Ascending aorta (tissue), 2 donors: ENCODE measurements at regions of chr6 and their contacts with region 1.

Region 1: GRCh38 chr6:36423101-36423824 is 19.4 kb downstream of the PXT1 start:
- DNase-seq: peak; percentile 93 to 99
- H3K4me3 ChIP-seq: peak overlapping the region; percentile 51 to 75
- H3K27ac ChIP-seq: peak overlapping the region; percentile 80 to 87
- H3K4me1 ChIP-seq: peaks cover 3 to 4% of the 10 kb centered on the region in 2 donors
- H3K27me3 ChIP-seq: no peaks in the 10 kb centered on the region
- CTCF ChIP-seq: peak; percentile 55 to 78 (median 60)

Region 2: DNA sequence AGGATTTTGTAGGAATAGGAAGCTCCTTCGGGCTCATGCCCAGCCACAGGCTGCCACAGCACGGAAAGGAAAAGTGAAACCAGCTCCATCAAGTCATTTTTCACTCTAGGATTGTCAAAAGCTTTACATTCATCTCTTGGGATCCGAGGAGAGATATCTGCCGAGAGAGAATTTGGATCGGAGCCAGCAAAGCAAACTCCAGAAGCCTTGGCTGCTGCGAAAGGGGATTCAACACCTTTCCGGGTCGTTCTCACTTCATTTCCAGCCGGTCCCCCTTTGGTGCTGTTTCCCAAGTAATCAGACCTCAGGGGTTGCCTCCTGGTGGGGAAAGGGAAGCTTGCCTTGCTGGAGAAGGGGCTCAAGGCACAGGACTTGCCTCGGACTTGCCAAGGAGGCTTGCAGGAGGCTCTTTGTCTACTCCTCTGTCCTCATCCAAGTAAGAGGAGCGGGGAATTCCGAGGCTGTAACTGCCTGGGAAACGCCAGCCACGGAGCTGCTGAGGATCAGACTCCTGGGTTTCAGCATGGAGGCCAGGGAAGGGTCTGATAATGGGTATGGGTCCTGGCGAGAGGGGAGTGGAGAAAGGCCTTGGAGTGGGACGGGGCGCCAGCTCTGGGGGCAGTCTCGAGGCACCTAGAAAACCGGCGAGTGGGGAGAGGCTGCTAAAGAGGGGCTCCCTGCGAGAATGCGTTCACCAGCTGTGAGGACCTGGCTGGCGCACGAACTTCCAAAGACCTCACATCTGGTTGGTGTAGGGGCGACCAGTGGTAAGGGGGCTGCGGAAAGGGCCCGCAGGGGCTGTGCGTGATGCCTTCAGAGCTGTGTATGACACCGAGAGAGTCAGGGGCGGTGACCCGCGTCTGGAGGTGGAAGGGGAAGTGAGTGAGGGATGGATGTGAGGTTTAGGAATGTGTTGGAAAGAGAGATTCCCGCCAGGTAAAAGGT is 36.5 kb before region 1 on chr6:
- intact Hi-C with region 1: loop called (anchors 2 kb)
- DNase-seq: peak in 1 of 2 donors; percentile 67
- H3K4me3 ChIP-seq: peak overlapping the region; percentile 66 to 78
- H3K27ac ChIP-seq: peak overlapping the region; percentile 61 to 75
- H3K4me1 ChIP-seq: peaks cover 5 to 35% of the 10 kb centered on the region in 2 donors
- H3K27me3 ChIP-seq: no peaks in the 10 kb centered on the region
- CTCF ChIP-seq: peak in 1 of 3 experiments; percentile 4

Region 3: GRCh38 chr6:36442671-36443470 is 19.6 kb after region 1 on chr6 and contains the starts of genes KCTD20 and PXT1:
- intact Hi-C with region 1: loop called (anchors 1 kb)
- DNase-seq: peak; percentile 67 to 94
- H3K4me3 ChIP-seq: peak within 1 kb of the TSS; percentile 88 to 92
- H3K27ac ChIP-seq: peak within 1 kb of the TSS; percentile 96 to 97
- H3K4me1 ChIP-seq: peaks cover 0 to 25% of the 10 kb centered on the region in 2 donors
- H3K27me3 ChIP-seq: no peaks in the 10 kb centered on the region
- CTCF ChIP-seq: peak in 1 of 3 experiments; percentile 10
- total RNA-seq, gene KCTD20: 71.5 TPM
- total RNA-seq, gene PXT1: not detected

Region 4: GRCh38 chr6:36459501-36459900 is 36.2 kb after region 1 on chr6:
- intact Hi-C with region 1: no loop called
- DNase-seq: no peak
- H3K4me3 ChIP-seq: no peak overlapping the region
- H3K27ac ChIP-seq: no peak overlapping the region
- H3K4me1 ChIP-seq: peaks cover 0 to 4% of the 10 kb centered on the region in 2 donors
- H3K27me3 ChIP-seq: no peaks in the 10 kb centered on the region
- CTCF ChIP-seq: no peak

Region 5: GRCh38 chr6:36504982-36505381 is 81.7 kb after region 1 on chr6:
- intact Hi-C with region 1: no loop called
- DNase-seq: no peak
- H3K4me3 ChIP-seq: no peak overlapping the region
- H3K27ac ChIP-seq: no peak overlapping the region
- H3K4me1 ChIP-seq: no peaks in the 10 kb centered on the region
- H3K27me3 ChIP-seq: no peaks in the 10 kb centered on the region
- CTCF ChIP-seq: no peak

Region 6: DNA sequence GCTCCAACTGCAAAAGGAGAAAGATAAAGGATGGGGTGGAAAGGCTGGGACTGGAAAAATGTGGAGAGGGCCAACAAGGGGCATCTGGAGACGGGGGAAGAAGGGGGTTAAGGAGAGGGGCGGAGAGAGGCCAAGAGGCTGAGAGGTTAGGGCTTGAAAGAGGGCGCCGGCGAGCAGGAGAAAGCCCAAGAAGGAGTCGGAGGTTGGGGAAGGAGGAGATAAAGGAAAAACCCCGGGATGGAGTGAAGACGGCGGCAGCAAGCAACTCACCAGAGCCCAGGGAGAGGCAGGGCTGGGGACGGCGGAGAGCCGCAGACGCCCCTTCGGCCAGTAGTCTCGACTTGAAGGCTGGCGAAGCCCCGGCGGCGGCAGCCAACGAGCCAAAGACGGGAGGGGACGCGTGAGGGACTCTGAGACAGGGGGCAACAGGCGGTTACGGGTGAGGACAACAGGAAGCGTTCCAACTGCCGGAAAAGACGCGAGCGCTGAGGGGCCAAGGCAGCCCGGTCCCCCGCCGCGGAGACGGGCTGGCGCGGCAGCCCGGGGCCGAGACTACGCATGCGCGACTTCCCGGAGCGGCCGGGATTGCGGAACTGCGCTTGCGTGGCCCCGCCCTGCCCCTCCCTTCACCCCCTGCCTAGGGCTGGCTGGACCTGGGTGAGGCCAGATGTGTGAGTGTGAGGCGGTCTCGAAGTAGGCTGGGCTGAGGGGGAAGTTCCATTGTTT is 123.8 kb after region 1 on chr6 and contains the start of gene STK38:
- intact Hi-C with region 1: loop called (anchors 2 kb)
- DNase-seq: peak; percentile 65 to 94
- H3K4me3 ChIP-seq: peak within 1 kb of the TSS; percentile 69 to 98
- H3K27ac ChIP-seq: peak within 1 kb of the TSS; percentile 89 to 97
- H3K4me1 ChIP-seq: peaks cover 0 to 16% of the 10 kb centered on the region in 2 donors
- H3K27me3 ChIP-seq: no peaks in the 10 kb centered on the region
- CTCF ChIP-seq: no peak
- total RNA-seq, gene STK38: 10.5 TPM

Region 7: GRCh38 chr6:36563237-36563927 is 140.1 kb after region 1 on chr6:
- intact Hi-C with region 1: no loop called
- DNase-seq: no peak
- H3K4me3 ChIP-seq: no peak overlapping the region
- H3K27ac ChIP-seq: no peak overlapping the region
- H3K4me1 ChIP-seq: no peaks in the 10 kb centered on the region
- H3K27me3 ChIP-seq: no peaks in the 10 kb centered on the region
- CTCF ChIP-seq: no peak

Region 8: DNA sequence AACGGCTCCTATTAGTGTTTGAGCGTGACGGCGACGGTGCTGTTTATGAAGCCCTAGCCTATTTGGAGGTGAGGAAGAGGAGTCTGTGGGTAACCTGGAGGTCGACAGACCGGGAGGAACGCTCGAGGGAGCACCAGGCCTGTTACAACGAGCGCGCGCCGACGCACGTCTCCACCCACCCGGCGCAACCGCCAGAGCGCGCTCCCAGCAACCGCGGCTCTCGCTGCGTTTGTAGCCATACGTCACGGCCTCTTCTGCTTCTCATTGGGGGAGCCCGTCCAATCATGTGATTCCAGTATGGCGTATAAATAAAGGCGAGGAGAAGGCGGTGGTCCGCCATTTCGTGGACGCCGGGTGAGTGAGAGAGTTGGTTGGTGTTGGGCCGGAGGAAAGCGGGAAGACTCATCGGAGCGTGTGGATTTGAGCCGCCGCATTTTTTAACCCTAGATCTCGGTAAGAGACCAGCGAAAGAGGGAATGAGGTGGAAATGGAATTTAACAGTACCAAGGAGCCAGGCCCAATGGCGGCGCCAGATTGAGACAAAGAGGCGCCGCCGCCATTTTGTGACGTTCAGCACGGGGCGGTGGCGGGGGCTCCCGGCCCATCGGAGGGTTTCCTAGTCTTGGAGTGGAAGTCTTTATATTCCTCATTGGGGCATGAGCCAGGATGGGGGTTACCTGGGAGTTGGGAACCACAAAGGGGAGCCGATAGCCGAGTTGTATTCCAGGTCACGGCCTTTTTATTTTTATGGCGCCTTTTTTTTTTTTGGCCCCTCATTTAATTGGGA is 171.0 kb after region 1 on chr6 and contains the start of gene SRSF3:
- intact Hi-C with region 1: loop called (anchors 1 kb)
- DNase-seq: peak; percentile 87 to 97
- H3K4me3 ChIP-seq: peak within 1 kb of the TSS; percentile 69 to 71
- H3K27ac ChIP-seq: peak within 1 kb of the TSS; percentile 96 to 97
- H3K4me1 ChIP-seq: peaks cover 9 to 27% of the 10 kb centered on the region in 2 donors
- H3K27me3 ChIP-seq: no peaks in the 10 kb centered on the region
- CTCF ChIP-seq: peak; percentile 47 to 49 (median 48)
- total RNA-seq, gene SRSF3: 94.7 TPM